GM12878 (cell line): ENCODE measurements at regions of chr17 and their contacts with region 1.

Region 1: GRCh38 chr17:31216053-31216751 is 80.8 kb downstream of the OMG start:
- DNase-seq: peak; percentile 17
- ATAC-seq: peak; percentile 40
- H3K4me3 ChIP-seq: no peak overlapping the region
- H3K27ac ChIP-seq: no peak overlapping the region
- H3K4me1 ChIP-seq: no peaks in the 10 kb centered on the region
- H3K27me3 ChIP-seq: no peaks in the 10 kb centered on the region
- CTCF ChIP-seq: peak; percentile 6 to 57 (median 32); a peak in 3 of 6 replicates
- EP300 ChIP-seq: no peak
- POLR2A ChIP-seq: no peak
- RAD21 ChIP-seq: peak; percentile 66

Region 2: DNA sequence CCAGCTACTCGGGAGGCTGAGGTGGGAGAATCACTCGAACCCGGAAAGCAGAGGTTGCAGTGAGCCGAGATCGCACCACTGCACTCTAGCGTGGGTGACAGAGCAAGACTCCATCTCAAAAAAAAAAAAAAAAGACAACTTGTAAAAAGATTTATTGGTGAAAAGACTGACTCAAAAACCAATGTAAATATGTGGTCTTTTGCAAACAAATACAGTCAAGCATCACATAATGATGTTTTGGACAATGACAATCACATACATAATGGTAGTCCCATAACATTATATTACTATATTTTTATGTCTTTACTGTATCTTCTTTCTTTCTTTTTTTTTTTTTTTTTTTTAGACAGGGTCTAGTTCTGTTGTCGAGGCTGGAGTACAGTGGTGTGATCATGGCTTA is 400.0 kb before region 1 on chr17:
- CTCF ChIA-PET with region 1: no interaction called
- POLR2A ChIA-PET with region 1: no interaction called
- RAD21 ChIA-PET with region 1: no interaction called
- SMC1A ChIA-PET with region 1: no interaction called
- in situ Hi-C with region 1: no loop called
- intact Hi-C with region 1: no loop called
- DNase-seq: no peak
- ATAC-seq: no peak
- H3K4me3 ChIP-seq: no peak overlapping the region
- H3K27ac ChIP-seq: no peak overlapping the region
- H3K4me1 ChIP-seq: peaks cover 24% of the 10 kb centered on the region
- H3K27me3 ChIP-seq: no peaks in the 10 kb centered on the region
- CTCF ChIP-seq: no peak
- EP300 ChIP-seq: no peak
- POLR2A ChIP-seq: no peak
- RAD21 ChIP-seq: no peak

Region 3: DNA sequence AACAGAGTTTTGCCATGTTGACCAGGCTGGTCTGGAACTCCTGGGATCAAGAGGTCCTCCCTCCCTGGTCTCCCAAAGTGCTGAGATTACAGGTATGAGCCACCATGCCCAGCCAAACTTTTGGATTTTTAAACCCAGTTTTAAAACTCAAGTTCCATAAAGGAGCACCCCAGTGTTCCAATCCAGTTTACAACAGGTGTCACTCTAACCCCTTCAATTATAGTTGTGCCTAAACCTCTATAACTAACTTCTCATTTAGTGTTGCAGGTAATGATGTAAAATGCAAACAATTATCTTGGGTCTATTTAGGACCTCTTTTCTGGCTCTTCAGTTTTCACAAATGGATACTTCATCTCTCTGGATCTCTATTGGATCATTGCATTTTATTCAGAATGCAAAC is 302.2 kb before region 1 on chr17:
- CTCF ChIA-PET with region 1: interaction called, 6 read pairs
- POLR2A ChIA-PET with region 1: no interaction called
- RAD21 ChIA-PET with region 1: interaction called, 3 read pairs
- SMC1A ChIA-PET with region 1: no interaction called
- in situ Hi-C with region 1: loop called (anchors 10 kb)
- intact Hi-C with region 1: no loop called
- DNase-seq: no peak
- ATAC-seq: no peak
- H3K4me3 ChIP-seq: no peak overlapping the region
- H3K27ac ChIP-seq: no peak overlapping the region
- H3K4me1 ChIP-seq: peaks cover under 1% of the 10 kb centered on the region; the same call in 1 of the 2 replicates
- H3K27me3 ChIP-seq: no peaks in the 10 kb centered on the region; a peak in 1 of 4 replicates
- CTCF ChIP-seq: peak in 1 of 3 experiments; percentile 36; a peak in 1 of 6 replicates
- EP300 ChIP-seq: no peak
- POLR2A ChIP-seq: no peak
- RAD21 ChIP-seq: peak; percentile 41

Region 4: DNA sequence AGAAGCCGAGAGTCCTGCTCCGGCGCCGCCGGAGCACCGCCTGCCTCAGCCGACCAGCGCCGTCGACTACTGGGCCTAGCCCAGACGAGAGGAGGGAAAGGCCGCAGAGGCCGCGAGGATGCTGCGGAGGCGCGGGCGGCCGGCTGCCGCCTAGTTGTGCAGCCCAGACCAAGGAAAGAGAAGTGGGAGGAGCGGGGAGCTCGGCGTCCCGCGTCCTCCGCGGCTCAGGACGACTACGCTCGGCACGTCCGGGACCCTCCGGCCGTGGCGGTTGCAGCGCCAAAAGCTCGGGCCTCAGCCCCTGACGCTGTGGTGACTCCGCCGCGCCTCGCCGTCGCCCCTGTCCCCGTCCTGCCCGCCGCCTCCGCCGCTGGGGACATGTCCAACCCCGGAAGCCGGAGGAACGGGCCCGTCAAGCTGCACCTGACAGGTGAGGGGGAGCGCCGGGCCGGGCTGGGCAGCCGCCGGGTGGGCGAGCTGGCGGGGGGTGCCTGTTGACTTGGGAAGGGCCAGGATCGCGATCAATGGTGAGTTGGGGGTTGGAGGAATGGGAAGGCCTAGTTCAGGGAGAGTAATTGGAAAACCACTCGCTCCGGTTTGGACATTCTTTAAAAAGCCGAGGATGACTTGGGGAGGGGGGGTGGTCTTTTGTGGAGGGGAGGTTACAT is 207.7 kb before region 1 on chr17:
- CTCF ChIA-PET with region 1: interaction called, 109 read pairs
- POLR2A ChIA-PET with region 1: no interaction called
- RAD21 ChIA-PET with region 1: interaction called, 58 read pairs
- SMC1A ChIA-PET with region 1: interaction called, 80 read pairs
- in situ Hi-C with region 1: loop called (anchors 5 kb)
- intact Hi-C with region 1: loop called (anchors 1 kb)
- DNase-seq: no peak
- ATAC-seq: peak; percentile 89
- H3K4me3 ChIP-seq: peak overlapping the region; percentile 74
- H3K27ac ChIP-seq: peak overlapping the region; percentile 42; the same call in 1 of the 2 replicates
- H3K4me1 ChIP-seq: no peaks in the 10 kb centered on the region
- H3K27me3 ChIP-seq: no peaks in the 10 kb centered on the region
- CTCF ChIP-seq: no peak
- EP300 ChIP-seq: no peak
- POLR2A ChIP-seq: peak; percentile 80
- RAD21 ChIP-seq: no peak

Region 5: GRCh38 chr17:31015639-31016038 is 200.6 kb before region 1 on chr17:
- CTCF ChIA-PET with region 1: interaction called, 109 read pairs
- POLR2A ChIA-PET with region 1: no interaction called
- RAD21 ChIA-PET with region 1: interaction called, 58 read pairs
- SMC1A ChIA-PET with region 1: interaction called, 80 read pairs
- in situ Hi-C with region 1: loop called (anchors 5 kb)
- intact Hi-C with region 1: loop called (anchors 1 kb)
- DNase-seq: no peak
- ATAC-seq: peak; percentile 30; the same call in 1 of the 3 replicates
- H3K4me3 ChIP-seq: no peak overlapping the region
- H3K27ac ChIP-seq: no peak overlapping the region
- H3K4me1 ChIP-seq: no peaks in the 10 kb centered on the region
- H3K27me3 ChIP-seq: no peaks in the 10 kb centered on the region
- CTCF ChIP-seq: peak in 1 of 3 experiments; percentile 13; a peak in 1 of 6 replicates
- EP300 ChIP-seq: no peak
- POLR2A ChIP-seq: no peak
- RAD21 ChIP-seq: peak; percentile 32; the same call in 1 of the 2 replicates

Region 6: DNA sequence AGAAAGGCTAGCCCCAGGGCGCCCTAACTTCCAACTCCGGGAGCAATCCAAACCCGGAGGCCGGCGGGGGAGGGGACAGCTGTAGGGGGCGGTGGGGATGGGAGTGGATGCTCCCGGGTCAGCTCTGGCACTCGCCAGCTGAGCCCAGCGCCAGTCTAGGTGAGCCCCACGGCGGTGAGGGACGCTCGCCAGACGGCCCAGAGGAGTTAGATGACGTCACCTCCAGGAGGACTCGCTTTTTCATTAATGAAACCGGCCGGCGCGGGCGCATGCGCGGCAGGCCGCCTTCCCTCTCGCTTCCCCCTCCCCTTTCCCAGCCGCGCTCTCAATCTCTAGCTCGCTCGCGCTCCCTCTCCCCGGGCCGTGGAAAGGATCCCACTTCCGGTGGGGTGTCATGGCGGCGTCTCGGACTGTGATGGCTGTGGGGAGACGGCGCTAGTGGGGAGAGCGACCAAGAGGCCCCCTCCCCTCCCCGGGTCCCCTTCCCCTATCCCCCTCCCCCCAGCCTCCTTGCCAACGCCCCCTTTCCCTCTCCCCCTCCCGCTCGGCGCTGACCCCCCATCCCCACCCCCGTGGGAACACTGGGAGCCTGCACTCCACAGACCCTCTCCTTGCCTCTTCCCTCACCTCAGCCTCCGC is 121.5 kb before region 1 on chr17 and contains the start of gene NF1:
- CTCF ChIA-PET with region 1: interaction called, 10 read pairs
- POLR2A ChIA-PET with region 1: no interaction called
- RAD21 ChIA-PET with region 1: interaction called, 7 read pairs
- SMC1A ChIA-PET with region 1: interaction called, 8 read pairs
- in situ Hi-C with region 1: no loop called
- intact Hi-C with region 1: loop called (anchors 5 kb)
- DNase-seq: peak; percentile 63
- ATAC-seq: peak; percentile 88
- H3K4me3 ChIP-seq: peak within 1 kb of the TSS; percentile 100
- H3K27ac ChIP-seq: peak within 1 kb of the TSS; percentile 76
- H3K4me1 ChIP-seq: no peaks in the 10 kb centered on the region
- H3K27me3 ChIP-seq: no peaks in the 10 kb centered on the region
- CTCF ChIP-seq: no peak
- EP300 ChIP-seq: no peak
- POLR2A ChIP-seq: peak; percentile 81
- RAD21 ChIP-seq: no peak
- polyA plus RNA-seq, gene NF1: 2.5 to 5.6 TPM

Region 7: DNA sequence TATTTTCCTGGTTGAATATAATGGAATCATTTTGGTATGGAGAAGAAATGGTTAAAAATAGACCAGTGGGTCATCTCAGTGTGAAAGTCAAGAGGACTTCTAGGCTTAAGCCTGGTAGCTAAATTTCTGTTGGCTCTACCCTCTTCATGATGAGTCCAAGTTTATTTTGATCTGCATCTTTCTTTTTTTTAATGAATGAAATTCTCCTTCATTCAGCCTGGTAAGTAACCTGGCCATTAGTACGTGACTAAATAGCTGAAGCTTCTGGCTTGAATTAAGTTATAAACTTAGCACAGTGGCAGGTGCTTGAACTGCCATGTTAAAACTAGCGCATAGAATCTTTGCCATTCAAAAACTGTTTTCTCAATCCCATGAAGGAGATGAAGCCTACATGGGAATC is 93.5 kb before region 1 on chr17:
- CTCF ChIA-PET with region 1: no interaction called
- POLR2A ChIA-PET with region 1: no interaction called
- RAD21 ChIA-PET with region 1: no interaction called
- SMC1A ChIA-PET with region 1: no interaction called
- in situ Hi-C with region 1: no loop called
- intact Hi-C with region 1: no loop called
- DNase-seq: no peak
- ATAC-seq: no peak
- H3K4me3 ChIP-seq: no peak overlapping the region
- H3K27ac ChIP-seq: no peak overlapping the region
- H3K4me1 ChIP-seq: no peaks in the 10 kb centered on the region
- H3K27me3 ChIP-seq: no peaks in the 10 kb centered on the region
- CTCF ChIP-seq: no peak
- EP300 ChIP-seq: no peak
- POLR2A ChIP-seq: no peak
- RAD21 ChIP-seq: no peak

Region 8: DNA sequence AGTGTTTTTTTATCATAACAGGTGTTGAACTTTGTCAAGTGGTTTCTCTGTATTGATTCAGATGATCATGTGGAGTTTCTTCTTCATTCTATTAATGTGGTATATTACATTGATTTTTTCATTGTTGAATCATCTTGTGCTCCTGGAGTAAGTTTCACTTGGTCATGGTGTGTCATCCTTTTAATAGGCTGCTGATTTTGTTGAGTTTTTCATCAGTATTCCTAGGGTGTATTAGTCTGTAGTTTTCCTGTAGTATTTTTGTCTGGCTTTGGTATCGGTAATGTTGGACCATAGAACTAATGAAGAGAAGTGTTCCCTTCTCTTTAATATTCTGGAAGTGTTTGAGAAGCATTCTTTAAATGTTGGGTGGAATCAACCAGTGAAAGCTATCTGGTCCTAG is 18.2 kb before region 1 on chr17:
- CTCF ChIA-PET with region 1: interaction called, 20 read pairs
- POLR2A ChIA-PET with region 1: interaction called, 3 read pairs
- RAD21 ChIA-PET with region 1: no interaction called
- SMC1A ChIA-PET with region 1: interaction called, 4 read pairs
- in situ Hi-C with region 1: no loop called
- intact Hi-C with region 1: no loop called
- DNase-seq: no peak
- ATAC-seq: no peak
- H3K4me3 ChIP-seq: no peak overlapping the region
- H3K27ac ChIP-seq: no peak overlapping the region
- H3K4me1 ChIP-seq: no peaks in the 10 kb centered on the region
- H3K27me3 ChIP-seq: no peaks in the 10 kb centered on the region
- CTCF ChIP-seq: no peak
- EP300 ChIP-seq: no peak
- POLR2A ChIP-seq: no peak
- RAD21 ChIP-seq: no peak

Region 9: DNA sequence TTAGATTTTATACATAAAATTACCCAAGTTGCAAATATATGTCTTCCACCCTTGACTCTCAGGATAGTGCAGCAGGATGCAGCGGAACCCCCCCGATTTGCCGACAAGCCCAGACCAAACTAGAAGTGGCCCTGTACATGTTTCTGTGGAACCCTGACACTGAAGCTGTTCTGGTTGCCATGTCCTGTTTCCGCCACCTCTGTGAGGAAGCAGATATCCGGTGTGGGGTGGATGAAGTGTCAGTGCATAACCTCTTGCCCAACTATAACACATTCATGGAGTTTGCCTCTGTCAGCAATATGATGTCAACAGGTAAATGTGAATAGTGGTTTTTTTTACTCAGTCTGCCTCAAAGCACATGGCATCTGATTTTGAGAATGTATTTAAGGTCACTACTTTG is 10.2 kb after region 1 on chr17:
- CTCF ChIA-PET with region 1: interaction called, 20 read pairs
- POLR2A ChIA-PET with region 1: no interaction called
- RAD21 ChIA-PET with region 1: no interaction called
- SMC1A ChIA-PET with region 1: interaction called, 10 read pairs
- in situ Hi-C with region 1: no loop called
- intact Hi-C with region 1: no loop called
- DNase-seq: no peak
- ATAC-seq: no peak
- H3K4me3 ChIP-seq: no peak overlapping the region
- H3K27ac ChIP-seq: no peak overlapping the region
- H3K4me1 ChIP-seq: no peaks in the 10 kb centered on the region
- H3K27me3 ChIP-seq: no peaks in the 10 kb centered on the region
- CTCF ChIP-seq: no peak
- EP300 ChIP-seq: no peak
- POLR2A ChIP-seq: no peak
- RAD21 ChIP-seq: no peak

Region 10: GRCh38 chr17:31286587-31286986 is 70.4 kb after region 1 on chr17:
- CTCF ChIA-PET with region 1: no interaction called
- POLR2A ChIA-PET with region 1: no interaction called
- RAD21 ChIA-PET with region 1: no interaction called
- SMC1A ChIA-PET with region 1: no interaction called
- in situ Hi-C with region 1: no loop called
- intact Hi-C with region 1: no loop called
- DNase-seq: no peak
- ATAC-seq: no peak
- H3K4me3 ChIP-seq: no peak overlapping the region
- H3K27ac ChIP-seq: no peak overlapping the region
- H3K4me1 ChIP-seq: no peaks in the 10 kb centered on the region
- H3K27me3 ChIP-seq: no peaks in the 10 kb centered on the region
- CTCF ChIP-seq: no peak
- EP300 ChIP-seq: no peak
- POLR2A ChIP-seq: no peak
- RAD21 ChIP-seq: no peak

Region 11: DNA sequence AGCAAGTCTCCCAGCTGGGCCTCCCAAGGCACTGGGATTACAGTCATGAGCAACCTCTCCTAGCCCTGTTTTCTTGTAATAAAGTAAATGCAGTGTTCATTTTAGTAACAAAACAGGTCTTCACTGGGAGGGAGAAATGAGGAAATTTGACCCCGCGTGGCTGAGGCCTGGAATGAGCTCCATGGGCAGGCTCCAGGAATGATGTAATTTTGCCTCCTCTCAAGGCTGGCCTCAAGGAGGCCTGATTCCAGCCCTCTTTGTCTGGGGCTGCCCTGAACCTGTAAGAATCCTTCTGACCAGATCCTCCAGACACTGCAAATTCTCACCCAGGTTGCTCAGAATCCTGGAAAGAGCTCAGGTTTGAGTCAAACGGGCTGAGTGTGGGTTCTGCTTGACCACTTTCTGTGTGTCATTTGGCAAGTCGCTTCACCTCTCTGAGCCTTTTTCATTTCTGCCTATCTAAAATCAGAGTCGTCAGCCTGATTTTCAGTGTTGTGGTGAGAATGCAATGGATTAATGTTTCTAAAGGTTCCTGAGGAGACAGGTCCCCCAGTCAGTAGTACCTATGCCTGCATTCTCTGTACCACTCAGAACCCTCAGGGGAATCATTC is 232.4 kb after region 1 on chr17:
- CTCF ChIA-PET with region 1: no interaction called
- POLR2A ChIA-PET with region 1: no interaction called
- RAD21 ChIA-PET with region 1: no interaction called
- SMC1A ChIA-PET with region 1: no interaction called
- in situ Hi-C with region 1: no loop called
- intact Hi-C with region 1: no loop called
- DNase-seq: no peak
- ATAC-seq: no peak
- H3K4me3 ChIP-seq: no peak overlapping the region
- H3K27ac ChIP-seq: no peak overlapping the region
- H3K4me1 ChIP-seq: peaks cover 7% of the 10 kb centered on the region
- H3K27me3 ChIP-seq: no peaks in the 10 kb centered on the region
- CTCF ChIP-seq: no peak
- EP300 ChIP-seq: no peak
- POLR2A ChIP-seq: no peak
- RAD21 ChIP-seq: no peak